Mammary epithelial cell (primary cell): ENCODE measurements at regions of chr2 and their contacts with region 1.

Region 1: DNA sequence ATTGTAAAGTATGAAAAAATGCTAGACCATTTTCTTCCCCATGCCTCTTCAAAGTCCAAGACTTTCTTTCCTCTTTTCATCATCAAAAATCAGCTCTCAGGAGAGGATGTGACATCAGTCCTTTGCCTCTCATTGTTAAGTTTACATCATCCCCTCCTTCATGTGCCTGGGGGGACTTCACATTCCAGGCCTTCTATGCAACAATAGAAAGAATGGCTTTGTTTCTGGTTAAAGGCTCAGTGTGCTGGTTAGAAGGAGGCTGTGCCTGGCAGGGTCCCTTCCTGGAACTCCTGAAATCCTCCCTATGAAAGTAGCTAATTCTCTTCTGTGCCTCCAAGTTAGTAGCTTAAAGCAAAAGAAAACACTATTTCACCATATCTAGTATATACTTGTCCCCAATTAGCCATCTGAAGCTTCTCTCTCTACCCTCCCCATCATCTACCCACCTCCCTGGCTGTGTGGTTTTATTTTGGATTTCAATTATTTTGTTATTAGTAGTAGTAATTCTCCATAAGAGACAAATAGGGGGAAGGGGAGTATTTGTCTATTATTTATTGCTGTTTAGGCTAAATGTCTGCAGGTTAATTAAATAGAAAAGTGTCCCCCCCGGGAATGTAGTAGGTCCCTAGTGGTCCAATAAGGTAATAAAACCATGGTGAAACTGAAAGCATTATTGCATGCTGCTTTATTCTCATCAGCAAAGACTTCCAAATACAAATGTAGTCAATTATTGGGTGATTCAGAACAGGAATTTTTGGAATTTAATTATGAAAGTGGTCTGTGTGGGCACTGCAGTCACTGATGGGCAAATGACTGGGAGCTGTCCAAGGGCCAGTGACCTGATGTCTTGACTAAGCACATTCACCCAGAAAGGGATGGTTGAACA is 69.0 kb downstream of the CPO start:
- DNase-seq: no peak
- H3K4me3 ChIP-seq: no peak overlapping the region
- H3K27ac ChIP-seq: peak overlapping the region; percentile 13
- H3K4me1 ChIP-seq: peaks cover 31% of the 10 kb centered on the region
- H3K27me3 ChIP-seq: no peaks in the 10 kb centered on the region
- CTCF ChIP-seq: peak; percentile 21 to 42

Region 2: DNA sequence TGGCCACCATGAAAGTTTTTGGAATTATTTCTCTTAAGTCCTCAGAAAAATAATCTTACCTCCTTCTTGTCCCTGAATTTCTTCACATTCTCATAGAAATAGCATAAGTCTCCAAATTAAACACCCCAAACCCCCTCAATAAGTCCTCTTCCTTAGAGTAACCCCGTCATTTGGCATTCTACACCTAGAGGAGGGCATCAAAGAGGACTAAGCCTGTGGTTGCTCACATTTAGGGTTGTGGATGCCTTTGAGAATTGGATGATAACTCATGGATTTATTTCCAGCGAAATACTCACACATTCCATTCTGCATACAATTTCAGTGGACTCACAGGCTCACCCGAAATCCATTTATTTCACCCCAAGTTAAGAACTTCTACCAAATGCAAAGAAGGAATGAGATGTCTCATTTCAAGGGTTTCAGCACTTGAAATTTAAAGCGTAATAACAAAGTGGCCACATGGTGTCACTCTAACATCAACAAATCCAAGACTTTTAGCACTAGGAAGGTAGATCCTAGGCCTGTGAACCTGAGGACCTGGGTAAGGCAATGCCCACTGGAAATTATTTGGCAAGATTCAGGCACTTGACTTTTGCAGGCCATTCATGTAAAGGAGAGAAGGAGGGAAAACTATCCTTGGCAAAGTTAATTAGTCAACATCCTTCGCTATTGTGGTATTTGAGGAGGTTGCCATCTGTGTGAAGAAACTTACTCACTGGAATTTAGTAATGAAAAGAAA is 314.8 kb before region 1 on chr2:
- CTCF ChIA-PET with region 1: no interaction called
- dilution Hi-C with region 1: no loop called
- in situ Hi-C with region 1: no loop called
- intact Hi-C with region 1: no loop called
- DNase-seq: peak; percentile 55
- H3K4me3 ChIP-seq: no peak overlapping the region
- H3K27ac ChIP-seq: no peak overlapping the region
- H3K4me1 ChIP-seq: no peaks in the 10 kb centered on the region
- H3K27me3 ChIP-seq: no peaks in the 10 kb centered on the region
- CTCF ChIP-seq: peak; percentile 66 to 68

Region 3: DNA sequence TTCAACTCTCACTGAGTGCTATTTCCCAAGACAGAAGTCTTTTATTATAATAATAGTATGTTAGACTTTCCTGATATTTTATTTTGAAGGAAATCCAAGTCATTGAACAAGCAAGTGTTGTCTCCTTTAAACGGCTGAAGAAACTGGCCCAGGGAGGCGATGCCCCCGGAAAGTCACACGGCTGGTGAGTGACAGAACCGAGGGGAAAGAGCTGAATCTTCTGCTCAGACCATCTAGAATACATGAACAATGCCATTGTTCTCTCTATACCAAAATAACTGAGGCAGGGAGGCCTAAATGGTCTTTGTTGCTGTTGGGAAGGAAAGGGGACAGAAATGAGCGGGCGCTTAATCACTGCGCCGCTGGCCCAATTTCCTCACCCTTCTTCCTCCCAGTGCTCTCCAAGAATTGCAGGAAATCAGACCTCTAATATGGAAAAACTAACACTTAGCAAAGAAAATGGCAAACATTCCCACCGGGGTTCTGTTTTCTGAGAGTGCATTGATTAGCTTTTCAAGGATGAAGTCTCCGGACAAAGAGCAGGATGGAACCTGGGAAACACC is 55.9 kb after region 1 on chr2:
- CTCF ChIA-PET with region 1: no interaction called
- dilution Hi-C with region 1: no loop called
- in situ Hi-C with region 1: no loop called
- intact Hi-C with region 1: loop called (anchors 5 kb)
- DNase-seq: no peak
- H3K4me3 ChIP-seq: no peak overlapping the region
- H3K27ac ChIP-seq: no peak overlapping the region
- H3K4me1 ChIP-seq: peaks cover 14% of the 10 kb centered on the region
- H3K27me3 ChIP-seq: no peaks in the 10 kb centered on the region
- CTCF ChIP-seq: no peak